Activated CD4-positive, alpha-beta T cell treated with anti-CD3 and anti-CD28 coated beads, Interleukin-2, amount 10 ng/mL, durations not matched to agents 7 days and 5 days (primary cell): ENCODE measurements at regions of chr1 and their contacts with region 1.

Region 1: GRCh38 chr1:208025031-208025430 is 114.1 kb upstream of the CD34 start:
- DNase-seq: no peak
- H3K4me3 Mint-ChIP-seq: no peak overlapping the region
- H3K27ac Mint-ChIP-seq: no peak overlapping the region
- H3K4me1 Mint-ChIP-seq: no peaks in the 10 kb centered on the region
- H3K27me3 Mint-ChIP-seq: peaks cover 13% of the 10 kb centered on the region

Region 2: DNA sequence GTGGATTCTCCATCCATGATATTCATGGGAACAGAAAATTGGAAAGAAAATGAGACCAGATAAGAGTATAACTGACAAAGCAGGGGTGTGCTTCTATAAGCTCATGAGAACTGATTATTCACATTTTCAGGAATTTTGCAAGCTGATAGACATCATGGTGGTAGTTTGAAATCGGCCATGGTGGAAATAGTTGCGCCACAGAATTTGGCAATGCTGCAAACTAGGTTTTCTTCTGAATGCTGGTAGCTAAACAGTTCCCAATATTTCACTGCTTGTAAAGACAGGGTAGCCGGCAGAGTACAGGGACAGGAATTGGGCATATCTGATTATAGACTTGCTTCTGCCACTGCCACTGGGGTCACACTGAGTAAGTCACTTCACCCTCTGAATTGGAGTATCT is 68.0 kb after region 1 on chr1:
- CTCF ChIA-PET with region 1: interaction called, 12 read pairs
- POLR2A ChIA-PET with region 1: no interaction called
- DNase-seq: no peak
- H3K4me3 Mint-ChIP-seq: no peak overlapping the region
- H3K27ac Mint-ChIP-seq: no peak overlapping the region
- H3K4me1 Mint-ChIP-seq: no peaks in the 10 kb centered on the region
- H3K27me3 Mint-ChIP-seq: no peaks in the 10 kb centered on the region

Region 3: DNA sequence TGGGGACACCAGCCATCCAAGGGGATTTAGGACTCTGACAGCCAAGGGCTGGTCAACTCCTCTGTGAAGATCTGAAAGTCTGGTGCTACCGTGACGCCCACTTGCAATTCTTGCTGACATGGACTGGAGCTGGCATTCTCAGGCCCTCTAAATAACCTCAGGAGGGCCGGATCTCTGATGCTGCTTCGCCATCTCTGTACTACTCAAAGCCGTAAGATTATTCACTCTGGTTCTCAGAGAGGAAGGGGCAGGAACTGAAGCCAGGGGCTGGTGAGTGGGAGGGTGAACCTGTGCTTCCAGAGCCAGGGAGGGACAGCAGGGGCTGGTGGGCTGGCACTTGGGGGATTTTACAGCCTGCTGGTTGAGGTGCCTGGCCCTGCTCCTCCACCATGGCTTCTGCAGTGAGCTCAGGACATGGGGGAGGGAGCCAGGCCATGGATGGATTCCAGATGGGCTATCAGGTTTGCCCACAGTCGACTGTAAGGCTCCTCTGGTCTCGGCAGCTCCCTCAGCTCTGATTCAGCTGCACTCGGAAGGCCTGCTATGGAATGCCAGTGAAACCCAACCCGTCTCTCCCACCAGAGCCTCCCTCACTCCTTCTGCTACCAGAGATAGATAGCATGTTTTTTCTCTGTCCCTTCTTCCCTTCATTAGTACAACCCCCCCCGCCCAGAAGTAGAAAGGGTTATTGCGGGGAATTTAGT is 134.7 kb after region 1 on chr1:
- CTCF ChIA-PET with region 1: no interaction called
- POLR2A ChIA-PET with region 1: no interaction called
- DNase-seq: no peak
- H3K4me3 Mint-ChIP-seq: no peak overlapping the region
- H3K27ac Mint-ChIP-seq: no peak overlapping the region
- H3K4me1 Mint-ChIP-seq: no peaks in the 10 kb centered on the region
- H3K27me3 Mint-ChIP-seq: peaks cover 31% of the 10 kb centered on the region

Region 4: DNA sequence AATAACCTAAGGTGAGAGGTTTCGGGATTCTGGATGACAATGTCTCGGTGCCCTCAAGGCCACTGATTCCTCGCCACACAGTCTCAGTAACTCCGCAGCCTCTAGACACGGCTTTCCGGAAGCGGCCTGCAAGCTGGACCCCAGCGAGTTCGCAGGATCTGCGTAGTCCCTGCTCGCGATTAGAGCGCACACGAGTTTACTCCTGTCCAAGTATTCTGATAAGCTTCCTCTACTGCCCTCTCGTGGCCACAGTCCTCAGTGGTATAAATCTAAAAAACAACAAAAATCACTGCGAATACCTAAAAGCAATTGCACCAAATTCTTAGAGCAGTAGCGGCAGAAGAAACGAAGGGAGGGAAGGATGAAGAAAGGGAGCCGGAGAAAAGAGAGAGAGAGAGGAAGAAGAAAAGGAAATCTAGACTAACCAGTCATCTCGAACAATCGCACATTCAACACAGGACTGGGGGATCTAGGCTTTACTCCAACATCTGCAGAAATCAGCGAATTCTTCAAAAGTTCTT is 220.2 kb after region 1 on chr1:
- CTCF ChIA-PET with region 1: interaction called, 28 read pairs
- POLR2A ChIA-PET with region 1: no interaction called
- DNase-seq: peak; percentile 83
- H3K4me3 Mint-ChIP-seq: peak overlapping the region; percentile 71
- H3K27ac Mint-ChIP-seq: no peak overlapping the region
- H3K4me1 Mint-ChIP-seq: peaks cover 14% of the 10 kb centered on the region
- H3K27me3 Mint-ChIP-seq: peaks cover 41% of the 10 kb centered on the region